ENCODE measurements at regions of chr1 and their contacts with region 1.

Region 1: DNA sequence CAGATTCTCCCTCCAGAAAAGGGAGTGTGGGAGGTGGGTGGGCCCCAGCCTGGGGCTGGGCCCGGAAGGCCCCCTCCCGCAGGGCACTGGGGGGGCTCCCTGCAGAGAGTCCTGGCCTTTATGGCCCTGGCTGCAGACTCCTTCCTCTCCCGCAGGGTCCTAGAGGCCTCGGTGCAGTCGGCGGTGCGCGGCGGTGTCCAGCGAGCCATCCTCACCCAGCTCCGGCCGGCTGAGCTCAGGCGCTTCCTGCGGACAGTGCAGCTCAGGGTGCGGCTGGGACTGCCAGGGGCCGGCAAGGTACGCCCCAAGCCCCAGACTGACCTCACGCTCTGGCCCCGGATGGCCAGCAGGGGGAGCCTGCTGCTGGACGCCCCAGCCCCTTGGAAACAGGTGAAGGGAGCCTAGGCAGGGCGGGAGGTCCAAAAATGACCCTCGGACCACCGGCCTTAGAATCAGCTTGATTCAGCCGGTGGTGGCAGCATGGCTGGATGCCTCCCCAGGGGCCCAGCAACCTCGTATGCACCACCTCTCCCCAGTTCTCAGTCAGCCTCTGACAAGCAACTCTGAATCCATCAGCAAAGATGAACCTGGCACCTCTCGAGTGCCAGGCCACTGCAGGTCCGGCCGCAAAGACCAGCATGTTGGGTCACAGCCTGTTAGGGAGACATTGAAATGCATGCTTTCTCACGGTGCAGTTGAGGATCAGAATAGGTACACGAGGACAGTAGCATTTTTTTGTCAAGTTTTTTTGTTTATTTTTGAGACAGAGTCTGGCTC is 20.6 kb downstream of the MTHFR start:
- DNase-seq: peak; percentile 87
- ATAC-seq: peak; percentile 56

Region 2: GRCh38 chr1:11735854-11736745 is 49.1 kb before region 1 on chr1 and contains the start of gene AGTRAP:
- intact Hi-C with region 1: loop called (anchors 10 kb)
- DNase-seq: peak; percentile 99
- ATAC-seq: peak; percentile 92
- total RNA-seq, gene AGTRAP: 13.6 TPM

Region 3: DNA sequence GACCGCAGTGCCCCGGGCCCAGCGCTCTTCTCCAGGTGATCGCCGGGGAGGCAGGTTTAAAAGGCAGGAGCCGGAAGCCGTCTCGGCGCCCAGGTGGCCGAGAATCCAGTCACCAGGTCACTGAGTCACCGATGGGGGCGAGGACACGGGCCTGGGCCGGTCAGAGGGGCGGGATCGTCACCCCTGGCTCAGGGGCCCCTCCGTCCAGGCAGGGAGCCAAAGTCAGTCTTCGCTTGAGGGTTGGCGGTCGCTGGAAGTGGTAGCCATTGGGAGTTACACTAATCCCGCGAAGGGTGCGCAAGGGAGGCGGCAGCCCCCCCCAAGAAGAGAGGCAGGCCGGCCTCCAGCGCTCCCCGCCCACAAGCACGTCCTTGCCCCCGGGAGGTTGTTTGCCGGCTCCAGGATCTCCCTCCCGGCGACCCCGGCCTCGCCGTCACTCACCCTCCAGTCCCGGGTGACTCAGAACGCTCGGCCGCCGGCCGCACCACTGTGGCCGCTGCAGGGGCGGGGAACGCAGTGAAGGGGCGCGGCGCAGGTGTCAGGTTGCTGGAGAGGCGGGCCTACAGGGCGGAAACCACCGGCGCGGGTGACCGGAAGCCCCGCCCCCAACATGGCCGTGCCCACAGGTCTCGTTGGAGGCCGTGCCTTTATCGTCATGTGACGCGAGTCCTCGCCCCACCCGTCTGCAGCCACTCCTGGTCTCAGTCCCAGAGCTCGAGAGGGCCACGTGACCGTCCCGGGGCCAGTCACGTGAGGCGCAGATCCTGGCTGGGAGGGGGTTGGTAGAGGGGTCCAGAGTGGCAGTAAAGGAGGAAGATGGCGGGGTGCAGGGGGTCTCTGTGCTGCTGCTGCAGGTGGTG is 20.5 kb after region 1 on chr1 and contains the starts of genes CLCN6 and MTHFR:
- intact Hi-C with region 1: loop called (anchors 2 kb)
- DNase-seq: peak; percentile 100
- ATAC-seq: peak; percentile 84
- total RNA-seq, gene CLCN6: 15.2 TPM
- total RNA-seq, gene MTHFR: 34.6 TPM

Region 4: GRCh38 chr1:11907275-11908094 is 122.3 kb after region 1 on chr1:
- intact Hi-C with region 1: no loop called
- DNase-seq: peak; percentile 93
- ATAC-seq: peak; percentile 90